ENCODE measurements at regions of chr5 and their contacts with region 1.

Region 1: DNA sequence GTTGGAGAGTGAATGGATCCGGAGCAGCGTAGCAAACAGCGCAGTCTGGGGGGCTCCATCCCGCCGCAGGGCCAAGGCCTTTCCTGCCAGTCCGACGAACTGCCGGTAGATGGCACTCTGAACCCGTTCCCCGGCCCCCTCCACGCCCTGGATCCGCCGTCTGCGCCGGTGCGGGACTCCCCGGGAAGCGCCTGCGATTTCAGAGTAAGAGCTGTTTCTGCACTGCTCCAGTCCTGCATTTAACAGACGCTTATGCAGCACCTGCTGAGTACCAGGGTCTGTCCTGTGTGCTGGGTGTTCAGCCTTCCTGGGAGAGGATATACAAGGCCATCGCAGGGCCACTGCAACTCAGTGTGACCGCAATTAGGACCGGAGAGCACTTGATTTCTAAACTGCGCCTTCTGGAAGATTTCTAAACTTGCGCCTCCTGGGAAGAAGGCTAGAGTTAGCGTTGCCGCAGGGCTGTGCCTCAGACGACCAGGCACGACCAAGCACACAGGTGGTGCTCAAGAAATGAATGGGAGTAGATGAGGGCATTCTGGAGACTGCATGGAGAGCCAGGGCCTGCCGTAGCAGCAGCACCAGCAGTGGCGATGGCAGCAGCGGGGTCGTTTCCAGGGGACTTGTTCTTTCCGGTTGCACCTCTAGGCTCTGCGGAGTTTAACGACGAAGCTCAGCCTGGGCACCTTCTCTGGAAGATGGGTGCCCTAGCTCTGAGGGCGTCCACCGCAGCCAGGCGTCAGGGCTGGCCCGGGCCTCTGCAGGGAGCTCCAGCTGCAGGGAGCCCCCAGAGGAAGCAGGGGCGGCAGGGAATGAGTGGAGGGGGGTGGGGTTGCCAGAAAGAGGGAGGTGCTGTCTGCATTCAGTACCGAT is 14.3 kb upstream of the TIFAB start:
- DNase-seq: peak; percentile 94
- H3K4me3 ChIP-seq: peak overlapping the region in 1 of 2 experiments; percentile 50; a peak in 1 of 4 replicates
- H3K27ac ChIP-seq: no peak overlapping the region
- H3K4me1 ChIP-seq: peaks cover 0 to 3% of the 10 kb centered on the region in 2 experiments; a peak in 1 of 4 replicates
- H3K27me3 ChIP-seq: peaks cover 51% of the 10 kb centered on the region
- CTCF ChIP-seq: peak; percentile 89
- EP300 ChIP-seq: no peak
- RAD21 ChIP-seq: peak; percentile 90

Region 2: DNA sequence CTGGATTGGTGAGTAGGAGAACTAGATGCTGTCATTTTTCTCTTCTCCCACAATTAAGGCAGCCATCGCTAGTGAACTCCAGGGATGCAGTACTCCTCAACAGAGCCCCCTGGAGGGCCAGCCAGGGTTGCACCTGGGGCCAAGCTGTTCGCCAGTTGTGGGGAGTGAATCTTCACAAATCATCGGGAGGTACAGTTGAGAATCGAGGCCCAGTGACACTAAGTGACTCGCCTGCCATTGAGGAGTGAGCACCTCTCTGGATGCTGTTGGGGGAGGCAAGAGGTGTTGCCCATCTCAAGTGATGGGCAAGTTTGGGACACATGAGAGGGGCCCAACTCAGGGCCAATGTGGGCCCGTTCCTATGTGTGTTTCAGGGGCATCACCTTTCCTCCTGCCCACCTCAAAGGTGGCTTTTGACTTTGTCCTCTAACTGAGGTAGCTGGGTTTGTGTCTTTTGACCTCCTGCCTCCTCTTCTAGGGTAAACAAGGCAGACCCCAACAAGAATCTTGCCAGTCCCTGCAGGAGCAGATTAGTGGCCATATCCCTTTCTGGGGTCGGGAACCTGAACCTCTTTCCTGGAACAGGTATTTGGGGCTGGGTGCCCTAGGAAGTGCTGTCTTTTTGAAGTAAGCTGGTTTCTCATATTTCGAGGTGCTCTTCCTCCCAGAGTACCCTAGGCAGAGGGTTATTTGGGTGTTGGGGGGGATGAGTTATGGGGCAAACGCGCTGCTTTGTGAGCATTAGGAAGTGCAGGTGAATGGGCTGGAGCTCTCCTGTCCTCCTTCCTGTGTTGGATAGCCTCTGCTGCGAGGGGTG is 248.5 kb before region 1 on chr5:
- CTCF ChIA-PET with region 1: no interaction called
- POLR2A ChIA-PET with region 1: no interaction called
- DNase-seq: no peak
- H3K4me3 ChIP-seq: no peak overlapping the region
- H3K27ac ChIP-seq: no peak overlapping the region
- H3K4me1 ChIP-seq: no peaks in the 10 kb centered on the region; a peak in 1 of 4 replicates
- H3K27me3 ChIP-seq: no peaks in the 10 kb centered on the region
- CTCF ChIP-seq: peak; percentile 14; the same call in 1 of the 2 replicates
- EP300 ChIP-seq: no peak
- RAD21 ChIP-seq: no peak

Region 3: GRCh38 chr5:135242021-135242865 is 224.2 kb before region 1 on chr5:
- CTCF ChIA-PET with region 1: no interaction called
- POLR2A ChIA-PET with region 1: no interaction called
- DNase-seq: no peak
- H3K4me3 ChIP-seq: no peak overlapping the region
- H3K27ac ChIP-seq: peak overlapping the region in 1 of 2 experiments; percentile 20; a peak in 1 of 4 replicates
- H3K4me1 ChIP-seq: peaks cover 36 to 74% of the 10 kb centered on the region in 2 experiments
- H3K27me3 ChIP-seq: no peaks in the 10 kb centered on the region
- CTCF ChIP-seq: no peak
- EP300 ChIP-seq: peak in 1 of 2 experiments; percentile 58; a peak in 2 of 4 replicates
- RAD21 ChIP-seq: no peak

Region 4: GRCh38 chr5:135271533-135272310 is 194.7 kb before region 1 on chr5:
- CTCF ChIA-PET with region 1: no interaction called
- POLR2A ChIA-PET with region 1: no interaction called
- DNase-seq: peak; percentile 27
- H3K4me3 ChIP-seq: no peak overlapping the region
- H3K27ac ChIP-seq: no peak overlapping the region
- H3K4me1 ChIP-seq: peaks cover 2 to 16% of the 10 kb centered on the region in 2 experiments; a peak in 3 of 4 replicates
- H3K27me3 ChIP-seq: no peaks in the 10 kb centered on the region
- CTCF ChIP-seq: no peak
- EP300 ChIP-seq: no peak
- RAD21 ChIP-seq: no peak

Region 5: DNA sequence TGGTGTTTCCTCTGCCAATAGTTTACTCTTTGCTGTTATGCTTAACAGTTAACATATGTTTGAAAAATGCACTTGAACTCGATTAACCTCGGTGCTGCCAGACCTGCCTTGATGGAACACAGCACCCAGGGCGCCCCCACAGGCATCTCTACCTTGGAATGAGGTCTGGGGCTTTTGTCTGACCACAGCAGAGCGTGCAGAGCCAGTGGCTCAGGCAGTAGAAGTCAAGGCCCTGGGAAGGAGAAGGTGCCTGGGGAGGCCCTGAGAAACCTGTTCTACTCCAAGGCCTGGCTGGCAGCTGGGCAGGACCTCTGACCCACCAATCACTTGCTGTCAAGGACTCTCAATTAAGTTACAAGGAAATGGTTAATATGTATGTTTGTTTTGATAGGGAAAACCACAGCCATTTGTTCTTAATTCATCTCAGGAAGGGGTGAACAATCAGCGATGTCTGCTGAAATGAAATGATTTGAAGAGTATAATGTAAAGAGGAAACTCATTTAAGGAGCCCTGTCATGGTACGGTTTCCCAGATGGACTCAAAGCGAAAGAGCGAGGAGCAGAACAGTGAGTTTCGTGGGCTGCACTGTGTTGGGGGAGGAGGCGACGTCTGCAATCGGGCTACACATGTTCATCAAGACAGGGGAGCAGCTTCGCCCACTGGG is 89.3 kb before region 1 on chr5:
- CTCF ChIA-PET with region 1: no interaction called
- POLR2A ChIA-PET with region 1: no interaction called
- DNase-seq: peak; percentile 68
- H3K4me3 ChIP-seq: no peak overlapping the region
- H3K27ac ChIP-seq: peak overlapping the region; percentile 49 to 90
- H3K4me1 ChIP-seq: peaks cover 17 to 66% of the 10 kb centered on the region in 2 experiments
- H3K27me3 ChIP-seq: no peaks in the 10 kb centered on the region
- CTCF ChIP-seq: no peak
- EP300 ChIP-seq: peak; percentile 71 to 73; a peak in 3 of 4 replicates
- RAD21 ChIP-seq: no peak

Region 6: DNA sequence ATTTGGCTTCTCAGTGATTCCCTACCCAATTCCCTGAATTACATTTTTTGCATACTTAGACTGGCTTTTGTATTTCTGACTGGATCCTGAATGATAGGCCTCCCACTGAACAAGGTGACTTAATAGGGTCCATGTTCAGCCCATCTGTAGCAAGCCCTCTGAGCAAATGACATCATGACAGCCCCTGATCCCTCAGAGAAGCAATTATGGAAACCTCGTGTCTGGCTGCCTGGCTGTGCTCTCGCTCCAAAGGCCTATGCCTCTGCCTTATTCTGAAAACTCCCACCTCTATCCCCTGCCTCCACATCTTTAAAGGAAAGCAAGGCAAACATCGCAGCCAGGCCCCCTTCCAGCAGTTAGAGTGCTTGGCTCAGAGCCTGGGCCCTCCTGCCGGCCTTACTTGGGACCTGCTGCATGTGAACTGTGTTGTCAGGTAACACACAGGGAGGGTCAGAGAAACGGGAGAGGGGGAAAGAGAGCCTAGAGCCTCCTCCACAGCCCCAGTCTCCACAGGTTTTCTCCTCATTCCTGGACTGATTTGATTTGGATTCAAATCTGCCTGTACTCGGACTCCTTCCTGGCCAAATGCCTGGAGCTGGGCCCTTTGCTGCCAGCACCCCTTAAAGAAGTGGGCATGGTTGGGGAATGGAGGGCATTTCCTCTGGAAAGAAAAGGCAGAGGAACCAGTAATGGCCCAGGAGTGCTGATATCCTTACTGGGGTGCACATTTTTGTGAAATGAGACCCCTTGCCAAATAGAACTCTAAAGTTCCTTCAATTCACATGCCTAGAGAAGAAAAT is 23.1 kb before region 1 on chr5:
- CTCF ChIA-PET with region 1: interaction called, 17 read pairs
- POLR2A ChIA-PET with region 1: no interaction called
- DNase-seq: no peak
- H3K4me3 ChIP-seq: no peak overlapping the region
- H3K27ac ChIP-seq: no peak overlapping the region
- H3K4me1 ChIP-seq: peaks cover 0 to 23% of the 10 kb centered on the region in 2 experiments; a peak in 1 of 4 replicates
- H3K27me3 ChIP-seq: no peaks in the 10 kb centered on the region
- CTCF ChIP-seq: no peak
- EP300 ChIP-seq: no peak
- RAD21 ChIP-seq: no peak

Region 7: DNA sequence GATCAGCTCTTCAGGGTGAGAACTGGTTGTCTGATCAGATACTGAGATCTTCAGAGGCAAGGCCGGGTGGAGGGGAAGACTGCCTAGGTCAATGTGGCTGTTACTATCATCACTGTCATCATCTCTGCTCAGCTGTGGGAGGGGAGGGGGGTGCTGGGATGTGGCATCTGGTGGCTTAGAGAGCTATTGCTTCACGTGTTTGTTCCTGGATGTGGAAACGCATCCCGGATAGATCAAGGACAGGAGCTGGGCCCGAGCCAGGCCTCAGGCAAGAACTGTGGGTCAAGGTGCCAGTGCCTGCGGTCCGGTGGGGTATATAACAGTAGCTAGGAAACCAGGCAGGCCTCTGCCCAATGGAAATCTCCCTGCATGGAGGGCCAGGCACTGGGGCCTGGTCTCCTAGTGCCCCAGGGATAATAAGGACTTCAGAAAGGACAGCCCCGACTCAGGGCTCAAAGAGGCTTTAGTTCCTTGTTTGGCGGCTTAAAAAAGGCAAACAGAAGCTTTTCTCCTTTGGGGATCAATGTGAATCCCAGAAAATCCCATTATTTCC is 16.0 kb after region 1 on chr5:
- CTCF ChIA-PET with region 1: interaction called, 52 read pairs
- POLR2A ChIA-PET with region 1: no interaction called
- DNase-seq: peak; percentile 62
- H3K4me3 ChIP-seq: no peak overlapping the region
- H3K27ac ChIP-seq: no peak overlapping the region
- H3K4me1 ChIP-seq: peaks cover 0 to 2% of the 10 kb centered on the region in 2 experiments; a peak in 1 of 4 replicates
- H3K27me3 ChIP-seq: no peaks in the 10 kb centered on the region; the same call in none of the 2 replicates
- CTCF ChIP-seq: no peak
- EP300 ChIP-seq: no peak
- RAD21 ChIP-seq: no peak

Region 8: GRCh38 chr5:135501965-135502364 is 35.6 kb after region 1 on chr5:
- CTCF ChIA-PET with region 1: interaction called, 13 read pairs
- POLR2A ChIA-PET with region 1: no interaction called
- DNase-seq: no peak
- H3K4me3 ChIP-seq: no peak overlapping the region
- H3K27ac ChIP-seq: no peak overlapping the region
- H3K4me1 ChIP-seq: no peaks in the 10 kb centered on the region
- H3K27me3 ChIP-seq: peaks cover 5% of the 10 kb centered on the region; the same call in 1 of the 2 replicates
- CTCF ChIP-seq: no peak
- EP300 ChIP-seq: no peak
- RAD21 ChIP-seq: no peak

Region 9: DNA sequence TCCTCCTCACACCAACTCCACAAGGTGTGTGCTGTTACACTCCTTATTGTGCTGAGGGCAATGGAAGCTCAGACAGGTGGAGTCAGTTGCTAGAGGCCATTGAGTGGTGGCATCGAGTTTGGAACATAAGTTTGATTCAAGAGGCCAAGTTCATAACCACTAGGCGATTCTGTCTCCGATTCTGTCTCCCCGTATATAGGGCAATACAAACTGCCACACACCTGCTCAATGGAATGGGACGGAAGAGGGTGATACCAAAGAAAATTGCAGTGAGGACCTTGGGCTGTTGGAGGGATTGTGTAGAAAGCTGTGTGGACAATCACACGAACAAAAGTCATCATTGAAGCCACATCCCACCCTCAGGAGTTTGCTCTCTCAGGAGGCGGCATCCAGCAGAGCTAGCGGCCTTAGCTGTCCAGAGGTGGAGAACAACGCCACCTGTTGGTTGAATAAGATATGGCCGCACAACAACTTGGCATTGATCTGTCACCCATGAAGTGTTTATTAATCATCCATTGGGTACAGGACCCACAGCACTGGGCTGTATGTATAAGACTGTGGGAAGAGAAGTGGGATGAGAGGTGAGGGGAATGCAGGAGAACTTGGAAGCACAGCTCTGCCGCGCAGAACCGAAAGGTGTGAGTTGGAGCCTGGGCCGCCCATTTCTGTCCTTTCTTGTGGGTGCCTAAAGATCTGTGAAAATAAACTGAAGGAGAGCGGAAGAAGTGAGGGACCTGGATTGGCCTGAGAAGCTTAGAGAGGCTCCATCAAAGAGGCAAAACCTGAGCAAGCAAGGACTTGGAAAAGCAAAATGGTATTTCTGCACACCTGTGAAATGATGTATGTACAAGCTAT is 85.4 kb after region 1 on chr5:
- CTCF ChIA-PET with region 1: interaction called, 791 read pairs
- POLR2A ChIA-PET with region 1: interaction called, 3 read pairs
- DNase-seq: peak; percentile 79
- H3K4me3 ChIP-seq: no peak overlapping the region; a peak in 1 of 4 replicates
- H3K27ac ChIP-seq: no peak overlapping the region
- H3K4me1 ChIP-seq: no peaks in the 10 kb centered on the region
- H3K27me3 ChIP-seq: peaks cover 63% of the 10 kb centered on the region
- CTCF ChIP-seq: peak; percentile 90
- EP300 ChIP-seq: no peak
- RAD21 ChIP-seq: peak; percentile 86

Region 10: GRCh38 chr5:135834639-135835529 is 368.5 kb after region 1 on chr5 and contains the start of gene SLC25A48:
- CTCF ChIA-PET with region 1: interaction called, 33 read pairs
- POLR2A ChIA-PET with region 1: no interaction called
- DNase-seq: peak; percentile 80
- H3K4me3 ChIP-seq: peak within 1 kb of the TSS; percentile 37 to 61; a peak in 3 of 4 replicates
- H3K27ac ChIP-seq: no peak within 1 kb of the TSS
- H3K4me1 ChIP-seq: no peaks in the 10 kb centered on the region; a peak in 1 of 4 replicates
- H3K27me3 ChIP-seq: peaks cover 42% of the 10 kb centered on the region
- CTCF ChIP-seq: peak; percentile 69
- EP300 ChIP-seq: no peak
- RAD21 ChIP-seq: no peak
- polyA plus RNA-seq, gene SLC25A48: 0.18 and 0.23 TPM in 2 replicates

Measured in SK-N-SH (cell line).